ENCODE measurements at regions of chr2 and their contacts with region 1.

Region 1: DNA sequence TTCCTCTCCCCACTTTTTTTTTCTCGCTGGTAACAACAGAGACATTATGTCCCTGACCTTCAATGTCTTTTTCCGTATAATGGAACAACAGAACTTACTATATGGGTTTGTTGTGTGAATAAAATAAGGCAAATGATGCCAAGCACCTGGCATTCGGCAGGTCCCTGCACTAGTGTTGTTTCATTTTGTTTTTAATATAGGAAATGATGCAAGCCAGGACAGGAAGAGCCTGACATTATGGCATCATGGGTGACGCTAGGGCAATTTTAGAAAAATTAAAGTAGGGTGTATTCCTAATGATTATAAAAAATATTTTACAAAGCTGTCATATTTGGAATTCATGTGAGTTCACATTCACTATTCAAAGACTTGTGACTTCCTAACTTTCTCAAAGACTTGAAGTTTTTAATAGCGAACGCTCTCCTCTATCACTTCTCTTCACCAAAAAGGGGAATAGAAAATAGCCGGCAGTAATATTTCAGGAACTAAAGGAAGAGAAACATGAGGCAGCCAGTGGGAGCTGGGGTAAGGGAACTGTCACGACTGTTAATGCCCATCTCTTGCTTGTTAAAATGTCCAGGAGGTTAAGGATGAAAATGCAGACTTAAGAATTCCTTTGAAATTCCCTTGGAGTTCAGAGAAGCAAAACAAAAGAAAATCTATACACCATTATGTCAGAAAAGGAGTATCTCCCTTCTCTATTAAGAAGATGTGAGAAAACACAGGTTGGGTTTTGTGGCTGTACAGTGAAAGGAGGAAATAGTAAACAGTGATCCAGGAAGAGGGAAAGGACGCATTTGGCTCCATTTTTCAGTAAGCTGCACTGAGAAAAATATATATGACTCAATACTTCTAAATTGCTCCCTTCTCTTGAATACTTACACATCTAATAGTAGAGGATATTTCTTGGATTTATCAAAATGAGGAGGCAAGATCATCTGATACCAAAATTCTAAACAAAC is 60.2 kb downstream of the DPP4 start:
- DNase-seq: no peak
- H3K4me3 Mint-ChIP-seq: peak overlapping the region; percentile 50
- H3K27ac Mint-ChIP-seq: peak overlapping the region; percentile 91
- H3K4me1 Mint-ChIP-seq: peaks cover 74% of the 10 kb centered on the region
- H3K27me3 Mint-ChIP-seq: no peaks in the 10 kb centered on the region

Region 2: GRCh38 chr2:161954103-161954502 is 59.7 kb before region 1 on chr2:
- CTCF ChIA-PET with region 1: interaction called, 4 read pairs
- POLR2A ChIA-PET with region 1: interaction called, 49 read pairs
- DNase-seq: peak; percentile 27
- H3K4me3 Mint-ChIP-seq: no peak overlapping the region
- H3K27ac Mint-ChIP-seq: peak overlapping the region; percentile 89
- H3K4me1 Mint-ChIP-seq: peaks cover 70% of the 10 kb centered on the region
- H3K27me3 Mint-ChIP-seq: no peaks in the 10 kb centered on the region

Region 3: GRCh38 chr2:162025121-162026031 is 11.6 kb after region 1 on chr2:
- CTCF ChIA-PET with region 1: interaction called, 7 read pairs
- POLR2A ChIA-PET with region 1: interaction called, 32 read pairs
- DNase-seq: no peak
- H3K4me3 Mint-ChIP-seq: no peak overlapping the region
- H3K27ac Mint-ChIP-seq: no peak overlapping the region
- H3K4me1 Mint-ChIP-seq: peaks cover 41% of the 10 kb centered on the region
- H3K27me3 Mint-ChIP-seq: no peaks in the 10 kb centered on the region

Region 4: GRCh38 chr2:162058973-162059668 is 45.3 kb after region 1 on chr2:
- CTCF ChIA-PET with region 1: no interaction called
- POLR2A ChIA-PET with region 1: interaction called, 38 read pairs
- DNase-seq: peak; percentile 29
- H3K4me3 Mint-ChIP-seq: peak overlapping the region; percentile 72
- H3K27ac Mint-ChIP-seq: peak overlapping the region; percentile 94
- H3K4me1 Mint-ChIP-seq: peaks cover 89% of the 10 kb centered on the region
- H3K27me3 Mint-ChIP-seq: no peaks in the 10 kb centered on the region

Region 5: GRCh38 chr2:162196638-162197037 is 182.8 kb after region 1 on chr2:
- CTCF ChIA-PET with region 1: no interaction called
- POLR2A ChIA-PET with region 1: no interaction called
- DNase-seq: no peak
- H3K4me3 Mint-ChIP-seq: no peak overlapping the region
- H3K27ac Mint-ChIP-seq: no peak overlapping the region
- H3K4me1 Mint-ChIP-seq: no peaks in the 10 kb centered on the region
- H3K27me3 Mint-ChIP-seq: peaks cover 31% of the 10 kb centered on the region

Measured in activated CD4-positive, alpha-beta memory T cell treated with anti-CD3 and anti-CD28 coated beads, Interleukin-2, amount 10 ng/mL, durations not matched to agents 7 days and 5 days (primary cell).